Heart left ventricle (tissue), 16 donors: ENCODE measurements at regions of chr1 and their contacts with region 1.

Region 1: GRCh38 chr1:21782868-21783678 is at the start of gene USP48:
- DNase-seq: peak; percentile 97 to 99 (median 98)
- ATAC-seq: peak; percentile 97 to 99 (median 98)
- H3K4me3 ChIP-seq: peak within 1 kb of the TSS; percentile 66 to 100 (median 96)
- H3K27ac ChIP-seq: peak within 1 kb of the TSS; percentile 98 to 100 (median 100)
- H3K4me1 ChIP-seq: peaks cover 0 to 35% (median 21%) of the 10 kb centered on the region in 12 donors
- H3K27me3 ChIP-seq: no peaks in the 10 kb centered on the region
- CTCF ChIP-seq: no peak
- POLR2A ChIP-seq: peak in 1 of 2 donors; percentile 93
- total RNA-seq, gene USP48: 22.3 to 45.5 (median 39.3) TPM

Region 2: GRCh38 chr1:21669258-21670058 is 113.6 kb before region 1 on chr1 and contains the start of gene RAP1GAP:
- intact Hi-C with region 1: no loop called
- DNase-seq: no peak
- ATAC-seq: peak in 1 of 4 donors; percentile 13
- H3K4me3 ChIP-seq: peak within 1 kb of the TSS; percentile 5 to 51 (median 42)
- H3K27ac ChIP-seq: no peak within 1 kb of the TSS
- H3K4me1 ChIP-seq: peaks cover 6 to 80% (median 43%) of the 10 kb centered on the region in 12 donors
- H3K27me3 ChIP-seq: peaks cover 0 to 48% (median 22%) of the 10 kb centered on the region in 9 donors
- CTCF ChIP-seq: no peak
- POLR2A ChIP-seq: no peak
- total RNA-seq, gene RAP1GAP: 3.1 to 8.0 (median 3.8) TPM

Region 3: GRCh38 chr1:21749109-21749508 is 34.0 kb before region 1 on chr1:
- intact Hi-C with region 1: loop called in 1 of 10 experiments (anchors 1 kb)
- DNase-seq: peak in 1 of 5 donors; percentile 48
- ATAC-seq: peak in 2 of 4 donors; percentile 50 to 71
- H3K4me3 ChIP-seq: no peak overlapping the region
- H3K27ac ChIP-seq: no peak overlapping the region
- H3K4me1 ChIP-seq: peaks cover 0 to 15% (median 0%) of the 10 kb centered on the region in 12 donors
- H3K27me3 ChIP-seq: no peaks in the 10 kb centered on the region
- CTCF ChIP-seq: no peak
- POLR2A ChIP-seq: no peak

Region 4: DNA sequence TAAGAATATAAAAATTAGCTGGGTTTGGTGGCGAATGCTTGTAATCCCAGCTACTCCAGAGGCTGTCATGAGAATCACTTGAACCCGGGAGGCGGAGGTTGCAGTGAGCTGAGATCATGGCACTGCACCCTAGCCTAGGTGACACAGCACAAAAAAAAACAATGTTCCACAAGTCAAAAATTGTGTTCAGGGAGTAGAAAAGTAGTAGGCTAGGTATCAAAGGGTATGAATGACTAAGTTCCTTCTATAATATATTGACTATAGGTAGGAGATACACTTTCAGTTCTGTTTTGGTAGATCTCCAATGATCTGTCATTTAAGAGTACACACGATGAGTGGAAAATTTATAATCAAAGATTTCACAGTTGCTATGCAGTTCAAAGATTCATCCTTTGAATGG is 16.9 kb before region 1 on chr1:
- intact Hi-C with region 1: loop called in 1 of 10 experiments (anchors 1 kb)
- DNase-seq: no peak
- ATAC-seq: no peak
- H3K4me3 ChIP-seq: no peak overlapping the region
- H3K27ac ChIP-seq: peak overlapping the region in 1 of 12 donors; percentile 24
- H3K4me1 ChIP-seq: peaks cover 4 to 71% (median 32%) of the 10 kb centered on the region in 12 donors
- H3K27me3 ChIP-seq: no peaks in the 10 kb centered on the region
- CTCF ChIP-seq: no peak
- POLR2A ChIP-seq: no peak

Region 5: GRCh38 chr1:21896652-21897532 is 113.8 kb after region 1 on chr1:
- intact Hi-C with region 1: no loop called
- DNase-seq: peak; percentile 84 to 94 (median 89)
- ATAC-seq: peak; percentile 81 to 85 (median 82)
- H3K4me3 ChIP-seq: no peak overlapping the region
- H3K27ac ChIP-seq: peak overlapping the region; percentile 83 to 98 (median 90)
- H3K4me1 ChIP-seq: peaks cover 20 to 94% (median 85%) of the 10 kb centered on the region in 12 donors
- H3K27me3 ChIP-seq: no peaks in the 10 kb centered on the region
- CTCF ChIP-seq: no peak
- POLR2A ChIP-seq: peak in 1 of 2 donors; percentile 12